GM23248 (cell line): ENCODE measurements at regions of chr3 and their contacts with region 1.

Region 1: GRCh38 chr3:136396916-136397315 is 146.8 kb downstream of the PCCB start:
- DNase-seq: peak; percentile 7
- H3K4me3 ChIP-seq: no peak overlapping the region
- H3K27ac ChIP-seq: no peak overlapping the region
- H3K4me1 ChIP-seq: no peaks in the 10 kb centered on the region
- H3K27me3 ChIP-seq: no peaks in the 10 kb centered on the region

Region 2: GRCh38 chr3:136250226-136250902 is 146.6 kb before region 1 on chr3 and contains the start of gene PCCB:
- in situ Hi-C with region 1: no loop called
- DNase-seq: peak; percentile 98
- H3K4me3 ChIP-seq: peak within 1 kb of the TSS; percentile 74
- H3K27ac ChIP-seq: peak within 1 kb of the TSS; percentile 75
- H3K4me1 ChIP-seq: peaks cover 4% of the 10 kb centered on the region
- H3K27me3 ChIP-seq: no peaks in the 10 kb centered on the region
- total RNA-seq, gene PCCB: 38.9 and 50.2 TPM in 2 replicates

Region 3: DNA sequence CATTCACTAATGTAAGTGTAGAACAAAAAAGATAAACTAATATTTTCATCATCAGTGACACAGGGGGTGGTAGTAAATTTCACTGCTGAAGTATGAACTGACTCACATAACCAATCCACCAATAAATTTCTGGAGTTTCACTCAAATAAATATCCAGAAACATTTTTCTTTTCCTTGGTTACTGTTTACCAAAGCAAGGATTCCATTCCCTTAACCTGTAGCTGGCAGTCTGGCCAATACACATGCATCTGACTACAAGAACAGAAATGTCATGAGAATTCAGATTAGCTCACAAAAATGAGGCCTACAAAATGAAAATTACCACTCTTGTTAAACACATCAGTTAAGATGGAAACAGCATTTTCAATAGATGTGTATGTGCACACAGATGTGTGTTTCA is 275.0 kb after region 1 on chr3:
- in situ Hi-C with region 1: no loop called
- DNase-seq: peak; percentile 66
- H3K4me3 ChIP-seq: no peak overlapping the region
- H3K27ac ChIP-seq: peak overlapping the region; percentile 50
- H3K4me1 ChIP-seq: peaks cover 16% of the 10 kb centered on the region
- H3K27me3 ChIP-seq: no peaks in the 10 kb centered on the region

Region 4: GRCh38 chr3:136752422-136753325 is 355.8 kb after region 1 on chr3:
- in situ Hi-C with region 1: loop called (anchors 10 kb)
- DNase-seq: peak; percentile 99
- H3K4me3 ChIP-seq: peak overlapping the region; percentile 92
- H3K27ac ChIP-seq: peak overlapping the region; percentile 99
- H3K4me1 ChIP-seq: peaks cover 23% of the 10 kb centered on the region
- H3K27me3 ChIP-seq: no peaks in the 10 kb centered on the region

Region 5: GRCh38 chr3:136831461-136831860 is 434.5 kb after region 1 on chr3:
- in situ Hi-C with region 1: no loop called
- DNase-seq: no peak
- H3K4me3 ChIP-seq: no peak overlapping the region
- H3K27ac ChIP-seq: no peak overlapping the region
- H3K4me1 ChIP-seq: peaks cover 11% of the 10 kb centered on the region
- H3K27me3 ChIP-seq: no peaks in the 10 kb centered on the region